ENCODE measurements at regions of chr11 and their contacts with region 1.

Region 1: DNA sequence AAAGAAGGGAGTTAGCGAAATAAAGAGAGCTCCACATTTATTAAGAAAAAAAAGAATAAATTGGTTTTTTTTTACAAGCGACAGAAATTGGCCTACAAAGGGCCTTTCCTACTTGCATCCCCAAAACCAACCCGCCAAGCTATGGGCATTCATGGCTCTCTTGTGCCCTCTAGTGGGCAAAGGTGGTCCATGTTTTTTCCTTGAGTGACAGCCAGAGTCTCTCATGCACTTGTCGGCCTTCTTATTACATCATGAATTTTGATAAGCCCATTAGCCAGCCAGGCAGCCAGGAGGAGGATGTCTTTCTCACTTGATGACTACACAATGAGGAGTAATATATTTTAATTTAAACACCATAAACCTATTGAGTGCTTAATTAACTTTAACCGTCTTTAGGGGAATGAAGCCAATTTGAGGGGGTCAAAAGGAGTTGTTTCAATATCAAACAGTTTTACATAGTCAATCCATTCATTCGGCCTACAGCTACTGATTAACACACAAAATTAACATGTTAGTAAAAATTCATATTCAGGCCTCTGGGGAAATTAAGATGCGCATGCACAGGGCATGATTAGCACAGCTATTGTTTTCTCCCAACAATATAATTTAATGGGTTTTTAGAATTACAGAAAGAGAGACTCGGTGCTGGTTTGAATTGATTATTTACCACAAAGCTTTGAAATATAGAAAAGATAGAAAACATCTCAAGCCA is 85.5 kb downstream of the RCN1 start:
- DNase-seq: peak; percentile 45
- ATAC-seq: peak; percentile 74

Region 2: GRCh38 chr11:32052218-32052617 is 124.2 kb before region 1 on chr11:
- intact Hi-C with region 1: loop called (anchors 2 kb)
- DNase-seq: no peak
- ATAC-seq: peak; percentile 52